ENCODE measurements at regions of chrX and their contacts with region 1.

Region 1: GRCh38 chrX:119266364-119266995 is 30.4 kb downstream of the PGRMC1 start:
- DNase-seq: peak in 3 of 5 donors; percentile 11 to 24 (median 13)
- H3K4me3 ChIP-seq: no peak overlapping the region
- H3K4me3 Mint-ChIP-seq: no peak overlapping the region
- H3K27ac ChIP-seq: no peak overlapping the region
- H3K27ac Mint-ChIP-seq: no peak overlapping the region
- H3K4me1 ChIP-seq: no peaks in the 10 kb centered on the region
- H3K4me1 Mint-ChIP-seq: no peaks in the 10 kb centered on the region
- H3K27me3 ChIP-seq: no peaks in the 10 kb centered on the region
- H3K27me3 Mint-ChIP-seq: peaks cover 6 to 8% of the 10 kb centered on the region in 2 donors

Region 2: GRCh38 chrX:119004920-119005524 is 261.5 kb before region 1 on chrX:
- CTCF ChIA-PET with region 1: no interaction called
- POLR2A ChIA-PET with region 1: no interaction called
- intact Hi-C with region 1: loop called (anchors 2 kb)
- DNase-seq: peak; percentile 27 to 41 (median 39)
- H3K4me3 ChIP-seq: no peak overlapping the region
- H3K4me3 Mint-ChIP-seq: no peak overlapping the region
- H3K27ac ChIP-seq: no peak overlapping the region
- H3K27ac Mint-ChIP-seq: peak overlapping the region in 1 of 7 donors; percentile 57
- H3K4me1 ChIP-seq: no peaks in the 10 kb centered on the region
- H3K4me1 Mint-ChIP-seq: peaks cover 4 to 34% (median 21%) of the 10 kb centered on the region in 4 donors
- H3K27me3 ChIP-seq: no peaks in the 10 kb centered on the region
- H3K27me3 Mint-ChIP-seq: no peaks in the 10 kb centered on the region

Region 3: GRCh38 chrX:119118780-119119395 is 147.6 kb before region 1 on chrX:
- CTCF ChIA-PET with region 1: interaction called, 23 read pairs
- POLR2A ChIA-PET with region 1: no interaction called
- intact Hi-C with region 1: loop called (anchors 1 kb)
- DNase-seq: peak; percentile 18 to 36 (median 26)
- H3K4me3 ChIP-seq: no peak overlapping the region
- H3K4me3 Mint-ChIP-seq: no peak overlapping the region
- H3K27ac ChIP-seq: no peak overlapping the region
- H3K27ac Mint-ChIP-seq: no peak overlapping the region
- H3K4me1 ChIP-seq: no peaks in the 10 kb centered on the region
- H3K4me1 Mint-ChIP-seq: peaks cover 0 to 2% (median 0%) of the 10 kb centered on the region in 4 donors
- H3K27me3 ChIP-seq: no peaks in the 10 kb centered on the region
- H3K27me3 Mint-ChIP-seq: peaks cover 1 to 2% of the 10 kb centered on the region in 2 donors

Region 4: DNA sequence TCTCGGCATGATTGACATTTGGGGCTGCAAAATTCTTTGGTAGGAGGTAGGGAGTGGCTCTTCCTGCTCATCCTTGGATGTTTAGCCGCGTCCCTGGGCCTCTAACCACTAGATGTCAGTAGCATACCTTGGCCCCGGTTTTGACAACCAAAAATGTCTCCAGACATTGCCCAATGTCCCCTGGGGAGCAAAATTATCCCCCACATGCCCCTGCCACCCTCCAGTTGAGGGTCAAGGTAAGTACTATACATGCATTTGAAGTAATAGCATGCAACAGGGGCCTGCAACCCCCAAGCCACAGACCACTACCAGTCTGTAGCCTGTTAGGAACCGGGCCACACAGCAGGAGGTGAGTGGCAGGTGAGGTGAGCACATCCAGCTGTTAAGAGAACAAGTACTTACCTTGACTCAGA is 121.2 kb before region 1 on chrX:
- CTCF ChIA-PET with region 1: no interaction called
- POLR2A ChIA-PET with region 1: no interaction called
- intact Hi-C with region 1: loop called (anchors 1 kb)
- DNase-seq: no peak
- H3K4me3 ChIP-seq: no peak overlapping the region
- H3K4me3 Mint-ChIP-seq: no peak overlapping the region
- H3K27ac ChIP-seq: no peak overlapping the region
- H3K27ac Mint-ChIP-seq: no peak overlapping the region
- H3K4me1 ChIP-seq: no peaks in the 10 kb centered on the region
- H3K4me1 Mint-ChIP-seq: no peaks in the 10 kb centered on the region
- H3K27me3 ChIP-seq: no peaks in the 10 kb centered on the region
- H3K27me3 Mint-ChIP-seq: no peaks in the 10 kb centered on the region